IMR-90 (cell line): ENCODE measurements at regions of chr2 and their contacts with region 1.

Region 1: DNA sequence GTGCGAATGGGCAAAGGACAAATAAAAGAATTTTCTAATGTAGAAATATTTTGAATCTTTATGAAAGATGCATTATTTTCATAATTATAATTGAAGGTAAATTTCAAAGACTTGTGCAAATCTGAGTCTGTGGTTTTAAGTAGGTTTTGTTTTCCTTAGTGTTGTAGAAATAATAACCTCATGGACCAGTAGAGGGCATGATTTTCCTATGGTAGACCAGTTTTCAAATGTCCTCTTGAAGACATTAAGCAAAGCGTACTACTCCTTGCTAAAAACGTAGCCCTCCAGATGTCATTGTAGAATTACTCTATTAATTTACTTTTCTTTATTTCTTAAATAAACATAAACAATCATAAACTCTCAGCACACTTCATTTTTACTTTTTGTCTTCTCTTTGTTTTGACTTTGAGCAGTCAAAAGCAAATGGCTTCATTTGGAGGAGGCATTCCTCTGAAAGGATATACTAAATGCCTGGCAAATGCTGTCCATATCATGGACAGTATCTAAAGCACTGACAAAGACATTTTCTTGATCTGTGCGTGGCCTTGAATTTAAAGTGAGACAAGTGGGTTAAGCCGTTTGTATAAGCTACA is 85.8 kb upstream of the FAM237A start:
- DNase-seq: peak; percentile 58
- ATAC-seq: peak; percentile 64; the same call in 1 of the 2 replicates
- H3K4me3 ChIP-seq: no peak overlapping the region
- H3K27ac ChIP-seq: no peak overlapping the region
- H3K4me1 ChIP-seq: no peaks in the 10 kb centered on the region
- H3K27me3 ChIP-seq: no peaks in the 10 kb centered on the region
- CTCF ChIP-seq: peak; percentile 53
- POLR2A ChIP-seq: no peak
- RAD21 ChIP-seq: peak; percentile 48

Region 2: DNA sequence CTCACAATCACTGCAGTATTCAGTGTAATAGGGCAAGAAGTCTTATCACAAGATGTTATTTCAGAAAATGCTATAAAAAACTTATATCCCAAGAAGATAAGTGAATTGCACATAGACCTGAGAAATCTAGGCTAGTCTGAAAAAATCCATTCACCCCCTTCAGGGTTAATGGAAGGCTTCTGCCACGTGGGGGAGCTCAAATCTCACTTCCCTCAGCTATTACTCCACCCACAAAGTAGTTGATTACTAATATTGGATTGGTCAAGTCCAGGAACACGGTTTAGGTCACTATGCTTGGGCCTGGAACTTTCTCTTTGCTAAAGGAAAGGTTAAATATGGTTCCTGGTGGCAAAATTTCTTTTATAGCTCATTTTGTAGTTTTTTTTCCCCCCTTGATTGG is 164.3 kb before region 1 on chr2:
- CTCF ChIA-PET with region 1: interaction called, 6 read pairs
- POLR2A ChIA-PET with region 1: no interaction called
- dilution Hi-C with region 1: no loop called
- in situ Hi-C with region 1: no loop called
- intact Hi-C with region 1: loop called (anchors 1 kb)
- DNase-seq: peak; percentile 54
- ATAC-seq: peak; percentile 97
- H3K4me3 ChIP-seq: no peak overlapping the region
- H3K27ac ChIP-seq: no peak overlapping the region
- H3K4me1 ChIP-seq: no peaks in the 10 kb centered on the region
- H3K27me3 ChIP-seq: no peaks in the 10 kb centered on the region
- CTCF ChIP-seq: peak; percentile 67
- POLR2A ChIP-seq: no peak
- RAD21 ChIP-seq: peak; percentile 69

Region 3: DNA sequence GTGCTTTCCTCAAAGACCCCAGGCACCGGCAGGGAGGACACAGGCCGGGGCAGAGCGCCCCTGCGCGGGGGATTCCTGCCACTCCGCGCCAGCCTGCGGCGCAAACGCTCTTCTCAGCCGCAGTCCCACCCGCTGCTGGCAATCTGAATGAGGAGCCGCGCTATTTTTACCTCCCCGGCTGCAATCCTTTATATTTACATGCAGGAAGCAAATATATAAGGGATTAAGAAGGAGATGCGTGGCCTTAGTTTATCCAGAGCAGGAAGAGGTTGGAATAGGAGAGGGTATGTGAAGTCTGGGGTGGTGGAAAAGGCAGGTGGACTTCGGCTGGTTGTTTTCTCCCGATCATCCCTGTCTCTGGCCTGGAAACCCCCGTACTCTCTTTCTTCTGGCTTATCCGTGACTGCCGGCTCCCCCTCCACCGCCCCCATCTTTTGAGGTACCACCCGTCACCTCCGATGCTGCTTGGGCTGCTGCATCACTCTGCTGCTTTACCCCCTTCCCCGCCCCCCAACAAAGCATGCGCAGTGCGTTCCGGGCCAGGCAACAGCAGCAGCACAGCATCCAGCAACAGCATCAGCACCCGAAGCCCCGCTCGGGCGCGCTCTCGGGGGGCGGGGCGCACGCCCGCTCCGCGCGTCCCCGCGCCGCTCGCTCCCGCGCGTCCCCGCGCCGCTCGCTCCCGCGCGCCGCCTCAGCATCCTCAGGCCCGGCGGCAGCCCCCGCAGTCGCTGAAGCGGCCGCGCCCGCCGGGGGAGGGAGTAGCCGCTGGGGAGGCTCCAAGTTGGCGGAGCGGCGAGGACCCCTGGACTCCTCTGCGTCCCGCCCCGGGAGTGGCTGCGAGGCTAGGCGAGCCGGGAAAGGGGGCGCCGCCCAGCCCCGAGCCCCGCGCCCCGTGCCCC is 113.4 kb before region 1 on chr2 and contains the start of gene ADAM23:
- CTCF ChIA-PET with region 1: no interaction called
- POLR2A ChIA-PET with region 1: no interaction called
- dilution Hi-C with region 1: no loop called
- in situ Hi-C with region 1: no loop called
- intact Hi-C with region 1: loop called (anchors 10 kb)
- DNase-seq: peak; percentile 52
- ATAC-seq: peak; percentile 82
- H3K4me3 ChIP-seq: peak within 1 kb of the TSS; percentile 79
- H3K27ac ChIP-seq: peak within 1 kb of the TSS; percentile 60
- H3K4me1 ChIP-seq: no peaks in the 10 kb centered on the region
- H3K27me3 ChIP-seq: peaks cover 24% of the 10 kb centered on the region
- CTCF ChIP-seq: 0 out of 2 replicates have a peak, but pooled peaks have one; percentile 13
- POLR2A ChIP-seq: no peak
- RAD21 ChIP-seq: no peak
- total RNA-seq, gene ADAM23: 2.9 and 3.9 TPM in 2 replicates

Region 4: GRCh38 chr2:206783718-206784117 is 227.3 kb after region 1 on chr2:
- CTCF ChIA-PET with region 1: no interaction called
- POLR2A ChIA-PET with region 1: no interaction called
- dilution Hi-C with region 1: no loop called
- in situ Hi-C with region 1: no loop called
- intact Hi-C with region 1: loop called (anchors 10 kb)
- DNase-seq: no peak
- ATAC-seq: peak; percentile 69
- H3K4me3 ChIP-seq: no peak overlapping the region
- H3K27ac ChIP-seq: no peak overlapping the region
- H3K4me1 ChIP-seq: no peaks in the 10 kb centered on the region
- H3K27me3 ChIP-seq: no peaks in the 10 kb centered on the region
- CTCF ChIP-seq: peak; percentile 36
- POLR2A ChIP-seq: no peak
- RAD21 ChIP-seq: no peak

Region 5: DNA sequence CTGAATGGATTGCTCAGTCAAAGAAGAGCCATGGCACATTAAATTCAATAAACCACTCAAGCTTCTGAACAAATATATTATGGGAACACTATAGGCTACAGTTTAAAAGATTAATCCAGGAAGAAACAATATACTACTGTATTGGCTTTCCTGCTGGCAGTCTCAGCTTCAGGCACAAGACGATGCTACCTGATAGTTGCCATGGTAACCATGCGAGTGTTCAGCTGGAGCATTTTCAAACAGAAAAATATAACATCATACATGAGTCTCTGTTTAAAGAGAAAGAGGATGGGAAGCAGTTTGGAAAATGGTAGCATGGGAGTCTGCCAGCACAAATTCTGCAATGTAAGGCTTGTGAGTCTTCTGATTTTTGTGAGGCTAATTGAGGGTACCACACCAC is 317.0 kb after region 1 on chr2:
- CTCF ChIA-PET with region 1: no interaction called
- POLR2A ChIA-PET with region 1: no interaction called
- dilution Hi-C with region 1: no loop called
- in situ Hi-C with region 1: no loop called
- intact Hi-C with region 1: no loop called
- DNase-seq: no peak
- ATAC-seq: no peak
- H3K4me3 ChIP-seq: no peak overlapping the region
- H3K27ac ChIP-seq: no peak overlapping the region
- H3K4me1 ChIP-seq: no peaks in the 10 kb centered on the region
- H3K27me3 ChIP-seq: peaks cover 4% of the 10 kb centered on the region; the same call in 1 of the 2 replicates
- CTCF ChIP-seq: no peak
- POLR2A ChIP-seq: no peak
- RAD21 ChIP-seq: no peak